T-cell (primary cell): ENCODE measurements at regions of chr7 and their contacts with region 1.

Region 1: DNA sequence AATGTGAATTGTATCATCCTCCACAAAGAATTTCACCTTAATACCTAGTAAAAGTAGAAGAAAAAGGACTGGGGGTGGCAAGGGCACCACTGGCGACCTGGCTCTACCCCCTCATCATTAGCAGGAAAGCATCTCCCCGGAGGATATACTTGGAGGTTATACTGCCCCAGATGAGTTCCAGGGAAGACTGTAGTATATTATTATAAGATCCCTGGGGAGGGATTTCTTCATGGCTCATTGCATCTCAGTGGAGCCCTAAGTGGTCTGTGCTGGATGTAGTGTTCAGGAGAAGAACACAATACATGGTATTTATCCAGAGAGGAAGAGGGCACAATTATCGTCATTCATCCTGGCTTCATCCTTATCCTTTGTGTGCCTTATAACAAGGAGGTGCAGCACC is 14.2 kb upstream of the DYNC1I1 start:
- DNase-seq: no peak
- ATAC-seq: no peak
- H3K4me3 ChIP-seq: no peak overlapping the region
- H3K4me3 Mint-ChIP-seq: no peak overlapping the region
- H3K27ac ChIP-seq: no peak overlapping the region
- H3K27ac Mint-ChIP-seq: no peak overlapping the region
- H3K4me1 ChIP-seq: no peaks in the 10 kb centered on the region
- H3K4me1 Mint-ChIP-seq: no peaks in the 10 kb centered on the region
- H3K27me3 ChIP-seq: no peaks in the 10 kb centered on the region
- H3K27me3 Mint-ChIP-seq: peaks cover 0 to 11% of the 10 kb centered on the region in 2 donors

Region 2: DNA sequence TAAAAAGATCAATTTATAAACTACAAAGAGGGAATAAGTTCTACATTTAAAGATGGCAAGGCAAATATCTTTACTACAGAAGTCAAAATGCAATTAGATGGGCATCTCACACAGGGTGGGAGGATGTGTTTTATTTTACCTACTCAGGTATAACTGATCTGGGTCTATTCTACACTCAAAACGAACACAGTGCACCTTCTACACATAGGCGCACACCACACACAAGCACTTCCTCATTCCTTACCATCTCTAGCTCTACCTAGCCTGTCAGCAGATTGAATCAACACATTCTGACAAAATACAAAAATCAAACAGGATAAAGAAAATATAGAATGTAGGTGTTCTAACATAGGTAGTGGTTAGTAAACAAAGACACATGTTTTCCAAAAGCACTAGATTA is 1167.0 kb before region 1 on chr7:
- CTCF ChIA-PET with region 1: no interaction called
- POLR2A ChIA-PET with region 1: interaction called in 1 of 2 experiments, 11 read pairs
- DNase-seq: no peak
- ATAC-seq: no peak
- H3K4me3 ChIP-seq: no peak overlapping the region
- H3K4me3 Mint-ChIP-seq: no peak overlapping the region
- H3K27ac ChIP-seq: no peak overlapping the region
- H3K27ac Mint-ChIP-seq: no peak overlapping the region
- H3K4me1 ChIP-seq: no peaks in the 10 kb centered on the region
- H3K4me1 Mint-ChIP-seq: no peaks in the 10 kb centered on the region
- H3K27me3 ChIP-seq: no peaks in the 10 kb centered on the region
- H3K27me3 Mint-ChIP-seq: no peaks in the 10 kb centered on the region

Region 3: GRCh38 chr7:95646350-95646749 is 111.8 kb before region 1 on chr7:
- CTCF ChIA-PET with region 1: no interaction called
- POLR2A ChIA-PET with region 1: no interaction called
- DNase-seq: no peak
- ATAC-seq: no peak
- H3K4me3 ChIP-seq: no peak overlapping the region
- H3K4me3 Mint-ChIP-seq: no peak overlapping the region
- H3K27ac ChIP-seq: no peak overlapping the region
- H3K27ac Mint-ChIP-seq: no peak overlapping the region
- H3K4me1 ChIP-seq: no peaks in the 10 kb centered on the region
- H3K4me1 Mint-ChIP-seq: no peaks in the 10 kb centered on the region
- H3K27me3 ChIP-seq: no peaks in the 10 kb centered on the region
- H3K27me3 Mint-ChIP-seq: no peaks in the 10 kb centered on the region